ENCODE measurements at regions of chr12 and their contacts with region 1.

Region 1: GRCh38 chr12:132761032-132761920 is at the start of gene ANKLE2:
- DNase-seq: peak; percentile 29 to 80
- H3K4me3 ChIP-seq: peak within 1 kb of the TSS; percentile 98 to 100
- H3K27ac ChIP-seq: peak within 1 kb of the TSS; percentile 93 to 99
- H3K4me1 ChIP-seq: peaks cover 0 to 26% (median 21%) of the 10 kb centered on the region in 4 donors
- H3K27me3 ChIP-seq: no peaks in the 10 kb centered on the region
- CTCF ChIP-seq: no peak

Region 2: DNA sequence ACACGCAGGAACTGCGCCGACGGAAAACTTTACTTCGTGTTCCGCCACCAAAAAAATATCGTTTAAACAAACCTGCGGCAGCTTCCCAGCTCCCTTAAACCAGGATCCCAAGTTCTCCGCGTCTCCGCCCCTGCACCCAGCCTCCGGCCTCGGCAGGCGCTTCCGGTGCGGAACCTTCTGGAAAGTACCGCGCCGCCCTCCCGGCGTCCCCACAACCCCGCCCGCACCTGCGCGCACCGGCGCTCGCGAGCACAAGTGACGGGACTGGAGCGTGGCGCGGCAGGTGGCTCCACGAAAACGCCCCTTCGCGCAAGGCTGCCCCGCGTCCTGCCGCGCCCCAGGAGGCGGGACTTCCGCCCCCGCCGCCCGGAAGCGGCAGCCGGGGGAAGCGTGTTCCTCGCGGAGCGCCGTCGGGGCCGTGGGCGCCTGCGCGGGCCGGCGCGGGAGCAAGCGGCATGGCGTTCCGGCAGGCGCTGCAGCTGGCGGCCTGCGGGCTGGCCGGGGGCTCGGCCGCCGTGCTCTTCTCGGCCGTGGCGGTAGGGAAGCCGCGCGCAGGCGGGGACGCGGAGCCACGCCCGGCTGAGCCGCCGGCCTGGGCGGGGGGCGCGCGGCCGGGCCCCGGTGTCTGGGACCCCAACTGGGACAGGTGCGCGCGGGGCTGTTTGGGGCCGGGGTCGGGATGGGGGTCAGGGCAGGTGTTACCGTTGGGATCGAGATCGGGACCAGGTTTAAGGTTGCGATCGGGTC is 50.7 kb before region 1 on chr12 and contains the start of gene PGAM5:
- intact Hi-C with region 1: loop called (anchors 10 kb)
- DNase-seq: peak; percentile 65 to 87
- H3K4me3 ChIP-seq: peak within 1 kb of the TSS; percentile 79 to 97
- H3K27ac ChIP-seq: peak within 1 kb of the TSS; percentile 64 to 72
- H3K4me1 ChIP-seq: peaks cover 0 to 22% (median 16%) of the 10 kb centered on the region in 4 donors
- H3K27me3 ChIP-seq: no peaks in the 10 kb centered on the region
- CTCF ChIP-seq: no peak

Region 3: DNA sequence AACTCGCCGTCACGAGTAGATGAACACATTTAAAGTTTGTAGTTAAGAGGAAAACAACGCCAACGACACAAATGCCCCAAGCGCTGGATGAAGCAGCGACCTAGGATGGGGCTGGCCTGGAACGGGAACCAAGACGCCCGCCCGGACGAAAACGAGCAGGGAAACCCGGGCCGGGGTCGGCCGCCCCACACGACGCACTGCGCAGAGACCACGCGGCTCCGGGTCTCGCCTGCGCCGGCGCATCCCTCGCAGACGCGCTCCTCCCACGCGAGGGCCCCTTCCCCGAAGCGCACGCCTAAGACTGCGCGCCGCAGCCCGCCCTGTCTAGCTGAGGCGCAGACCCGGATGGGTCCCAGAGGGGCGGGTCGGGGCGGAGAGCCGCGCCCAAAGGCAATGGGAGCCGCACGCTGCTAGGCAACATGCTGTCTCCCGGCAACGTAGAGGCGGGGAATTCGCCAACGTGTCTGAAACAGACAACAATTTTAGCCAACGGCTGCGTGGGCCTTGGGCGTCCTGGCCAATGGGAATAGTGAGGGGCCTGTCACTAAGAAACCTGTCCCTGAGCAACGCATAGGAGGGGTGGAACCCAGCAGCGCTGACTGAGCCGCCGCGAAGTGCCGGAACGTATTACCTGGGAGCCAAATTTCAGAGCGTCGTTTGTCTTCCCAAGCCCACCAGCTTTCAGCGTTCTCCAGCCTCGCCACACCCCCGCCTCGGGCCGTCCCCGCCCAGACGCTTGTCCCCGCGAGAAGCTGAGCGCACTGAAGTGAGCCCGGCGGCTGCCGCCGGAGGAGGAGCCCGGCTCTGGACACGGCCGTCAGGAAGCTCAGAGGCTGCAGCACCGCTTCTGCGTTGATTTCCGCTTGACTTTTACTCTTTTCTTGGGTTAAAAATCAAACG is 147.1 kb after region 1 on chr12:
- intact Hi-C with region 1: loop called (anchors 10 kb)
- DNase-seq: peak; percentile 95 to 98
- H3K4me3 ChIP-seq: peak overlapping the region; percentile 55 to 70
- H3K27ac ChIP-seq: peak overlapping the region; percentile 82 to 88
- H3K4me1 ChIP-seq: peaks cover 0 to 15% (median 10%) of the 10 kb centered on the region in 4 donors
- H3K27me3 ChIP-seq: no peaks in the 10 kb centered on the region
- CTCF ChIP-seq: peak in 1 of 2 experiments; percentile 9